ENCODE measurements at regions of chr2 and their contacts with region 1.

Region 1: GRCh38 chr2:191677646-191678436 is at the start of gene NABP1:
- DNase-seq: peak; percentile 99
- H3K4me3 Mint-ChIP-seq: peak within 1 kb of the TSS; percentile 88
- H3K27ac Mint-ChIP-seq: peak within 1 kb of the TSS; percentile 98
- H3K4me1 Mint-ChIP-seq: peaks cover 50% of the 10 kb centered on the region
- H3K27me3 Mint-ChIP-seq: no peaks in the 10 kb centered on the region
- total RNA-seq, gene NABP1: 73.5 to 73.7 TPM

Region 2: GRCh38 chr2:190674966-190675650 is 1002.7 kb before region 1 on chr2:
- CTCF ChIA-PET with region 1: no interaction called
- POLR2A ChIA-PET with region 1: no interaction called
- DNase-seq: no peak
- H3K4me3 Mint-ChIP-seq: peak overlapping the region; percentile 8
- H3K27ac Mint-ChIP-seq: peak overlapping the region; percentile 65
- H3K4me1 Mint-ChIP-seq: peaks cover 64% of the 10 kb centered on the region
- H3K27me3 Mint-ChIP-seq: no peaks in the 10 kb centered on the region

Region 3: DNA sequence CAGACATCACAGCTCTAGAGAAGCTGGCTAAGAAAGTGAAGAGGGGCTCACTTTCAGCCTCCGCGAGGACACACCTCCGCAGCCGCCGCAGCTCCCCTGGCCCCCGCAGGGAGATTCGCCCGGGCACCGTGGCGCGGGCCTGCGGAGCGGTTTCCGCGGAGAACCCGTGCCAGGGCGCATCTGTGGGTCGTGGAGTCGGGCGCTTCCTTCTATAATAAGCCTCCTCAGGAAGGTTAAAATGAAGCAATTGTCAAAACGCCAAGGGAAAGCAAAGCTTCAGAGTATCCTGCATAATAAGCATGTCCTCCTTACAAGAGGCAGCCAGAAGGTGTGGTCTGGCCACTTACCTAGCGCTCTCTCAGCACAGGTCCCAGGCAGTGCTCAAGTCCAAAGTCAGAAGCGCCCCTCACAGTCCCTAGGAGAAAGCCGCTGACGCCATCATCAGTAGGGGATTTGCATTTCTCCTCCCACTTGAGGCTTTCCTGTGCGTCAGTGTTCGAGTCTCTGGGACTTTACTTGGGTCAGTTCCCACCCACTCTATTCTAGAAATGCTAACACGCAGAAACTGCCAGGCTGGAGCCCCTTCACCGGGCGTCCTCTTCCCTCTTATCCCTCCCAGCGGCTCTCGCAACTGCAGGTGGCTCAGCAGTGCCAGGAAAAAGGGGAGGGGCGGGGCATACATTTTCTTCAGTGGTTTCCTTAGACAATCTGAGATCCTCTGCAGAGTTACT is 527.1 kb before region 1 on chr2 and contains the start of gene STAT4:
- CTCF ChIA-PET with region 1: no interaction called
- POLR2A ChIA-PET with region 1: interaction called, 31 read pairs
- DNase-seq: peak; percentile 84
- H3K4me3 Mint-ChIP-seq: peak within 1 kb of the TSS; percentile 94
- H3K27ac Mint-ChIP-seq: peak within 1 kb of the TSS; percentile 97
- H3K4me1 Mint-ChIP-seq: peaks cover 75% of the 10 kb centered on the region
- H3K27me3 Mint-ChIP-seq: no peaks in the 10 kb centered on the region
- total RNA-seq, gene STAT4: 122 to 124 TPM

Region 4: GRCh38 chr2:191625016-191625415 is 52.8 kb before region 1 on chr2:
- CTCF ChIA-PET with region 1: interaction called, 3 read pairs
- POLR2A ChIA-PET with region 1: interaction called, 176 read pairs
- DNase-seq: peak; percentile 71
- H3K4me3 Mint-ChIP-seq: no peak overlapping the region
- H3K27ac Mint-ChIP-seq: peak overlapping the region; percentile 74
- H3K4me1 Mint-ChIP-seq: peaks cover 40% of the 10 kb centered on the region
- H3K27me3 Mint-ChIP-seq: peaks cover 11% of the 10 kb centered on the region

Region 5: DNA sequence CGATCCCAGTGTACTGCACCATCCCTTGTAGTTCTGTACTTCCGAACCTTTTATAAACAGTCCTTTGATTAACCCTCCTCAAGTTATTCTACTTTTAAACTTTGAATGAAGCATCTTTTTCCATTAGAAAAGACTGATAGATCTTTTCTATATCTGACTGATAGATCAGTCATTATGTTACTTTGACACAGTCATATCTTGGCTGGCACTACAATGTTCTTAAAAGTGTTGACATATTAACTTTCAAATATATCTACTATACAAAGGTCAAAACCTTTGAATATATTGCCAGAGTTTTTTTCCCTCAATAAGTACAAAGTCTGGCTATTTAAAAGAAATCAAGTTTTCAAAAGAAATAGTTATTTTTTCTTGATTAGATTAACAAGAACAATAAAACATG is 35.3 kb before region 1 on chr2:
- CTCF ChIA-PET with region 1: interaction called, 13 read pairs
- POLR2A ChIA-PET with region 1: interaction called, 298 read pairs
- DNase-seq: no peak
- H3K4me3 Mint-ChIP-seq: no peak overlapping the region
- H3K27ac Mint-ChIP-seq: no peak overlapping the region
- H3K4me1 Mint-ChIP-seq: peaks cover 21% of the 10 kb centered on the region
- H3K27me3 Mint-ChIP-seq: peaks cover 32% of the 10 kb centered on the region

Region 6: DNA sequence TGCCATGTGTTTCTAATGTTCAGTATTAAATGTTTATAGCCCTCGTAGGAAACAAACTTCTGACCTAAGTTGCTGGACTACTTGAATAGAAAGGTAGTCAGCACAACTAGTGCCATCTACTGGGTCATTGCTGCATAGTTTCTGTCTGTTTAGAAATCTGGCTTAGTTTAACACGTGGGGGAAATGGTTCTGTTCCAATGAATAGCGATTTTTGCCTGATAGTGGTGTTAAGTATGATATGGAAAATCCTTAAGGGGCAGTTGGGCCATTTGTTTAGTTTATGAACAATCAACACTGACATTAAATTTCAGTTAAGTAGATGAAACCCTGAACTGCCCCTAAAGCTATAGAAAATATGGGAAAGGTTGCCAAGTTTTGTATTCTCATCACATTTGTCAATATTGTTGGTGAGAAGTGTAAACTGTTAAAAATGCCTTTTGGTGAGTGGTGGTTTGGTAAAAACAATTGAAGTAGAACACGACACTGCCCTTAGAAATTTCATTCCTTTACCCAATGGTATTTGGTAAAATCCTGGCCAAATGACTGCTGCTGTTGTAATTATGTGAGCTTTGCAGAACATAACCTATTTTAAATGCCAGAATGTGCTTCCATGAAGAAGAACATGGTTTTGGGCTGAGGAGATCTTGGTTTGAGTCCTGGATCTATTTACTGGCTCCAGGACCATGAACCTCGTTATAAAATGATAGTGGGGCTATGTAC is 13.3 kb after region 1 on chr2:
- CTCF ChIA-PET with region 1: interaction called, 6 read pairs
- POLR2A ChIA-PET with region 1: interaction called, 32 read pairs
- DNase-seq: peak; percentile 41
- H3K4me3 Mint-ChIP-seq: no peak overlapping the region
- H3K27ac Mint-ChIP-seq: no peak overlapping the region
- H3K4me1 Mint-ChIP-seq: peaks cover 24% of the 10 kb centered on the region
- H3K27me3 Mint-ChIP-seq: no peaks in the 10 kb centered on the region

Region 7: GRCh38 chr2:191846515-191847476 is 169.0 kb after region 1 on chr2 and contains the start of gene CAVIN2:
- CTCF ChIA-PET with region 1: no interaction called
- POLR2A ChIA-PET with region 1: no interaction called
- DNase-seq: no peak
- H3K4me3 Mint-ChIP-seq: no peak within 1 kb of the TSS
- H3K27ac Mint-ChIP-seq: no peak within 1 kb of the TSS
- H3K4me1 Mint-ChIP-seq: peaks cover 2% of the 10 kb centered on the region
- H3K27me3 Mint-ChIP-seq: peaks cover 49% of the 10 kb centered on the region
- total RNA-seq, gene CAVIN2: not detected